ENCODE measurements at regions of chr16 and their contacts with region 1.

Region 1: DNA sequence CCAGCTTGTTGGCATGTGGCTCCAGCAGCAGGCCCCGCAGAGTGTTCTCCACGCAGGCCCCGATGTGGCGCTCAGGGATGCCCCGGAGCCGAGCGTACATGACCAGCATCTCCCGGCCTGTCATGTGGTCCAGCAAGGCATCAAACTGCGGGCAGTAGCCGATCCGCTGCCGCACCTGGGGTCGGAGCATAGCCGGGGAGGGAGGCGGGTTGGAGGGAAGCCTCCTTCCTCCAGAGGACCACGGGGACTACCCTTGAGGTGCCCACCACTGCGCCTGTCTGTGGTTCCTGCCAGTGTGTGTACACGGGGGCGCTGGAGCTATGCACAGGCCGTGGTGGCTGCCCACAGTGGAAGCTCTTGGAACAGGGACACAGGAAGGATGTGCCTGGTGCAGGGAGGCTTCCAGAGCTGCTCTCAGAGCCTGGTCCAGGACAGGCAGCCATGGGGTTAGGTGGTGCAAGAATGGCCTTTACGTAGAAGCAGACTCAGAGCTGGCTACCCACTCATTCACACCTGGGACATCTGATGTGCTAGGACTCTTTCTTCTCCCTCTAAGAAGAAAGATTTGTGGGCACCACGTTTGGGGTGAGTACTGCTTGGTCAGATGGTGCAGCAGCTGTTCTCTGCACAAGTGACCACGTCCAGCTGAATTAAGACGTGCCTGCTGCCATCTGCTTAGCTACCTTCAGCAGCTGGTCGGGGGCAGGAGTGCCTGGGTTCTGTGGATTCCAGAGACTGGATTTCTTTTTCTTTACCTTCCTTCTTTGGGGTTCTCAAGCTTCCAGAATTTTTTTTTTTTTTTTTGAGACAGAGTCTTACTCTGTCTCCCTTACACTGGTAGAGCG is 11.3 kb upstream of the RNPS1 start:
- DNase-seq: no peak
- H3K4me3 ChIP-seq: no peak overlapping the region
- H3K27ac ChIP-seq: no peak overlapping the region
- H3K4me1 ChIP-seq: no peaks in the 10 kb centered on the region
- H3K27me3 ChIP-seq: peaks cover 62% of the 10 kb centered on the region
- CTCF ChIP-seq: no peak

Region 2: GRCh38 chr16:2317231-2318020 is 38.2 kb after region 1 on chr16:
- CTCF ChIA-PET with region 1: no interaction called
- POLR2A ChIA-PET with region 1: interaction called, 11 read pairs
- intact Hi-C with region 1: no loop called
- DNase-seq: no peak
- H3K4me3 ChIP-seq: no peak overlapping the region
- H3K27ac ChIP-seq: no peak overlapping the region
- H3K4me1 ChIP-seq: no peaks in the 10 kb centered on the region
- H3K27me3 ChIP-seq: peaks cover 25% of the 10 kb centered on the region
- CTCF ChIP-seq: no peak

Measured in PC-9 (cell line).